GM18951 (cell line): ENCODE measurements at regions of chr17 and their contacts with region 1.

Region 1: DNA sequence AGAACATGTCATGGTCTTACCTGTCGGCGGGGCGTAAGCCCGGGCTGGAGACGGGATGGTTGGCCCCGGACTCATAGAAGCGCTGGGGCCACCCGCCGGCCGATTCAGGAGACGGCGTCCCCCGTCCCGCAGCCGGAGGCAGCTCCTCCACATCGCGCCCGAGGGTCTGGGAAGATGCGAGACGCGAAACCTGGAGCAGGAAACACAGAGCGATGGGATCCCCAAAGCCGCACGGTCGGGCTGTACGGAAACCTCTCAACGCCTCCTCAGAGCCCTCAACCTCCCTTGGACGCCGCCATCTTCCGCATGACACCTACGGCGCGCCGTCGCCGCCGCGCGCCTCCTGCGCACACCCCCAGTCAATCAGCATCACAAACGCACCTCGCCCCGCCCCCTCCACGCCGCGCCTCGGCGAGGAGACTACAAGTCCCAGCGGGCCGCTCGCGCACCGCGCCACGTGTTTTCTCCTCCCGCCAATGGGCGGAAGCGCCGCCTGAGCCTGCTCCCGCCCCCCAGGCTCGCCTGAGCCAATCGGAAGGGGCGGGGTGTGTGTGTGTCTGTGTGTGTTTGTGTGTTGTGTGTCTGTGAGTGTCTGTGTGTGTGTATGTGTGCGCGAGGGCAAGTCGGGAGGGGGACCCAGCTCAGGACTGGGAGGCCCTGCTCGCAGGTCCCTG is at the starts of genes ATPAF2 and GID4:
- POLR2A ChIP-seq: peak; percentile 68

Region 2: GRCh38 chr17:17890773-17891759 is 147.9 kb before region 1 on chr17:
- in situ Hi-C with region 1: loop called (anchors 25 kb)
- POLR2A ChIP-seq: no peak

Region 3: GRCh38 chr17:18004884-18005305 is 34.1 kb before region 1 on chr17:
- in situ Hi-C with region 1: no loop called
- POLR2A ChIP-seq: no peak

Region 4: DNA sequence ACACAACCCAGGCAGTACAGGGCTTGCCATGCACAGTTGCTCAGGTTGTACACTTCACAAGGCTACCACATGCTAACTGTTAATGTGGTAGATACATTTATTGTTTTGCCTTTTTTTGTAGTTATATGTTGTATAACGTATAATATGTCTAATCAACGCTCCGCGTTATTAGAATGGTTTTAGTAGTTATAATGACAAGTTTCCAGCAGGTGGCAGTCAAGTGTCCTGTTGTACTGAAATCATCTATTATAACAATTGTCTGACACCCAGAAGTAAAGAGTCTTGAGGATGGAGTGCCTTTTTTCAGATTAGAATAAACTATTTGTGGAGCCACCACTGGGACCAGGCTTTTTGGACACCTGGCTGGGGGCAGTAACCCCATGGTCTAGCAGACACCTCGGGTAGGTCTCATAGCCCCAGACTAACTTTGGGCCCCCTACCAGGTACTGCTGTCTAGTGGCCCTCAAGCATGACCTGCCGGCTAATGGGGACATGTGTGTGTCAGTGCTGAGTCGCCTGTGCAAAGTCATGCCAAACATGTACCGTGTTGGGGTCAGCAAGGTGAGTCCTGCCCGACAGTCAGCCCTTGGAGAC is 102.3 kb after region 1 on chr17:
- in situ Hi-C with region 1: no loop called
- POLR2A ChIP-seq: no peak